ENCODE measurements at regions of chr11 and their contacts with region 1.

Region 1: DNA sequence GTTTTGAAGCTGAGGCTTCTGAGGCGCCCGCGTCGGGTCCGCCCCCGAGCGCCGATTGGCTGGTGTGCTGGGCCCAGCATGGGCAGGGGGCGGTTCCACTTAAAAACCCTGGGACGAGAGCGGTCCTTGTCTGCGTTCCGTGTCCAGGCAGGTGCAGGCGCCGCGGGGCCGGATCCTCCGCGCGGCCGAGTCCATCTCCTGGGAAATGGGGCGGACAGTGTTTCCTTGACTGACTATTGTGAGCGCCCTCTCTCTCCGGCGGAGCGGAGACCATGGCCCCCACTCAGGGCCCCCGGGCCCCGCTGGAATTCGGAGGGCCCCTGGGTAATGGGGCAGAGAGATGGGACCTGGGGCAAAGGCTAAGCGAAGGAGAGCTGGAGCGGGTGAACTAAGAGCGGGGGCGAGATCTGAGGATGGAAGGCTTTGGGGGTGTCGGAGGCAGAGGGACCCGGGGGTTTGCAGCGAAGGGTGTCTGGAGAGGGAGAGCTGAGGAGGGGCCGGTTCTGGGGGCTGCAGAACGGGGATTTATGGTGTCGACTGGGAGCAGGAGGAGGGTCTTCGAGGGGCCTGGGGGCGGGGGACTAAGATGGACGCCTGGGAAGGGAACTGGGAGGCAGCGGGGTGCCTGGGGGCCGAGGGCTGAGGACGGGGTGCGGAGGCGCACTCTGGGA is at the start of gene TM7SF2:
- DNase-seq: peak; percentile 84 to 96 (median 90)
- ATAC-seq: peak; percentile 69 to 71
- H3K4me3 Mint-ChIP-seq: peak within 1 kb of the TSS; percentile 81 to 99 (median 88)
- H3K27ac Mint-ChIP-seq: peak within 1 kb of the TSS; percentile 63 to 99 (median 92)
- H3K4me1 Mint-ChIP-seq: peaks cover 27 to 50% (median 42%) of the 10 kb centered on the region in 4 donors
- H3K27me3 Mint-ChIP-seq: no peaks in the 10 kb centered on the region
- polyA plus RNA-seq, gene TM7SF2: 17.4 to 22.6 (median 21.2) TPM

Region 2: GRCh38 chr11:64947208-64947814 is 164.6 kb before region 1 on chr11:
- POLR2A ChIA-PET with region 1: no interaction called
- DNase-seq: no peak
- ATAC-seq: no peak
- H3K4me3 Mint-ChIP-seq: no peak overlapping the region
- H3K27ac Mint-ChIP-seq: no peak overlapping the region
- H3K4me1 Mint-ChIP-seq: no peaks in the 10 kb centered on the region
- H3K27me3 Mint-ChIP-seq: peaks cover 0 to 4% (median 0%) of the 10 kb centered on the region in 5 donors

Region 3: DNA sequence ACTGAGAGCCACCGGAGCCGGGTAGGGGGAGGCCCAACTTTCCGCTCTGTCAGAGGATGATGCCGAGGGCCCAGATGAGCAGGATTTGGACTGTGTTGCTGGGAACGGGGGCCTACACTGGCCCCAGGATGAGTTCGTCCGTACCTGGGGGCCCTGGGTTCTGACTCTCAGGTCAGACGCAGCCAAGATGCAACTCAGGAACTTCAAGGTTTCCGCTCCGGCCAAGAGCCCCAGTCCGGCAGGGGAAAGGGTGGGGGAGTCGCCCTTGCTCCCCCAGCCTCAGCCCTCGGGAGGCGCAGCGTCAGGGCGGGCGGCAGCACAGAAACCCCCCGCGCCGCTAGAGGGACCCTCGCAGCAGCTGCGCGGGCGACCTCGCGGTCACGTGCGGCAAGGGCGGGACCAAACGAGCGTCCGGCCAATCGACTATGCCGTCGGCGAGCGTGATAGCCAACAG is 98.2 kb before region 1 on chr11:
- POLR2A ChIA-PET with region 1: interaction called, 19 read pairs
- DNase-seq: peak; percentile 83 to 93 (median 90)
- ATAC-seq: peak; percentile 82 to 89
- H3K4me3 Mint-ChIP-seq: peak overlapping the region; percentile 86 to 94 (median 89)
- H3K27ac Mint-ChIP-seq: peak overlapping the region; percentile 82 to 99 (median 94)
- H3K4me1 Mint-ChIP-seq: peaks cover 17 to 31% (median 29%) of the 10 kb centered on the region in 4 donors
- H3K27me3 Mint-ChIP-seq: no peaks in the 10 kb centered on the region

Region 4: DNA sequence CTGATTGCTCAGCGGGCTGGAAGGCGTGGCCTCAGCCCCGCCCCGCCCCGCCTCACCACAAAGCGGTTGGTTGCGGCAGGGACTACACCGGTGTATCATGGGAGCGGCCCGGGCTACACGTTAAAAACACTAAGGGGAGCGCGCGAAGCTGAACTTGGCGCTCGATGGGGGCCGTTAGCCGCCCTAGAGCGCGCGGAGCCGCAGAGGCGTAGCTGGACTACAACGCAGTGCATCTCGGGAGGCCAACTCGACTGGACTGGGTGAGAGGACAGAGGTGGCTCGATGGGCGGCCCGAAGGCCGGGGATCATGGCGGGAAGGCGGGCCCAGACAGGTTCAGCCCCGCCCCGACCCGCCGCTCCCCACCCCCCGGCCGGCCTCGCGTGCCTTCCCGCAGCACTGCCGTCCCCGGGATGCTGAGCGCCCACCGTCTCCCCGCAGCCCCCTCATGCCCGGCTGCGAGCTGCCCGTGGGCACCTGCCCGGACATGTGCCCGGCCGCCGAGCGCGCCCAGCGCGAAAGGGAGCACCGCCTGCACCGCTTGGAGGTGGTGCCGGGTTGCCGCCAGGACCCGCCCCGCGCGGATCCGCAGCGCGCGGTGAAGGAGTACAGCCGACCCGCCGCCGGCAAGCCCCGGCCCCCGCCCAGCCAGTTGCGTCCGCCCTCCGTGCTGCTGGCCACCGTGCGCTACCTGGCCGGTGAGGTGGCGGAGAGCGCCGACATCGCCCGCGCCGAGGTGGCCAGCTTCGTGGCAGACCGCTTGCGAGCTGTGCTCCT is 70.8 kb before region 1 on chr11 and contains the start of gene SAC3D1:
- POLR2A ChIA-PET with region 1: interaction called, 12 read pairs
- DNase-seq: peak; percentile 75 to 92 (median 85)
- ATAC-seq: peak; percentile 91 to 92
- H3K4me3 Mint-ChIP-seq: peak within 1 kb of the TSS; percentile 90 to 96 (median 93)
- H3K27ac Mint-ChIP-seq: peak within 1 kb of the TSS; percentile 78 to 95 (median 92)
- H3K4me1 Mint-ChIP-seq: peaks cover 5 to 27% (median 19%) of the 10 kb centered on the region in 4 donors
- H3K27me3 Mint-ChIP-seq: no peaks in the 10 kb centered on the region
- polyA plus RNA-seq, gene SAC3D1: 6.7 to 13.9 (median 10.7) TPM

Region 5: DNA sequence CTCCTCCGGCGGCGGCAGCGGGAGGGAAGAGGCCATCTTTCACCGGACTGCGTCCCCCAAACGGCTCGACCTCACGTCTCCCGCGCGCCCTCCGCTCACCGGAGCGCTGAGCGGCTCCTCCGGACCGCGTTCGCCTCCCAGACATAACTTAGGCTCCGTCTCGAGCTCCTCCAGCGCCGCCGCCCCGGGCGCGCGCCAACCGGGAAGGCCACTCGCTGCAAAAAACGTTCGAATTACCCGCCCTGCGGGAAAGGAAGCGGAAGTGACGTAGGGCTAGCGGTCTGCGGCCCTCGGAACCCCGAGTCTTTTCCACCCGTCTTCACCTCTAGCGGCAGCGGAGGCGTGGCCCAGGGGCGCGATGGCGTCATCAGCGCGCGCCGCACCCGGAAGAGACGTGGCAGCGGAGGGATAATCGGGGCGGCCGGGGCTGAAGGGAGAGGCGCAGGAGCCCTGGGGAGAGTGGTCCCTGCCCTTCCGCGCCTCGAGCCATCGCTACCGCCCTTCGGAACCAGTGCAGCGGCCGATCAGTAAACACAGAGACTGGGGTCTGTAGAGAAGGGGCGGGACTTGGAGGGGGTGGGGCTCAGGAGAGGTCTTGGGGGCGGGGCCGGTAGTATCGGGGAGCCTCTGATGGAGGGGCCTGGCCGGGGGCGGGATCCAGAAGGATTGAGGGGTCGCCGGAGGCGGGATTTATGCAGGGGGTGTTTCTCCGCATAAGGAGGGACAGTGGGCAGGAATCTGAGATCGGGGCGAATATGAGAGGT is 27.9 kb before region 1 on chr11 and contains the starts of genes CDCA5 and ZFPL1:
- POLR2A ChIA-PET with region 1: interaction called, 18 read pairs
- DNase-seq: peak; percentile 92 to 98 (median 96)
- ATAC-seq: peak; percentile 88 to 92
- H3K4me3 Mint-ChIP-seq: peak within 1 kb of the TSS; percentile 86 to 99 (median 92)
- H3K27ac Mint-ChIP-seq: peak within 1 kb of the TSS; percentile 91 to 99 (median 98)
- H3K4me1 Mint-ChIP-seq: peaks cover 18 to 31% (median 27%) of the 10 kb centered on the region in 4 donors
- H3K27me3 Mint-ChIP-seq: peaks cover 0 to 2% (median 0%) of the 10 kb centered on the region in 5 donors
- polyA plus RNA-seq, gene CDCA5: 0.22 to 0.90 (median 0.35) TPM
- polyA plus RNA-seq, gene ZFPL1: 21.5 to 33.1 (median 24.9) TPM

Region 6: GRCh38 chr11:65095974-65096806 is 15.7 kb before region 1 on chr11 and contains the start of gene VPS51:
- POLR2A ChIA-PET with region 1: interaction called, 115 read pairs
- DNase-seq: peak; percentile 65 to 93 (median 87)
- ATAC-seq: peak; percentile 88 to 90
- H3K4me3 Mint-ChIP-seq: peak within 1 kb of the TSS; percentile 77 to 96 (median 90)
- H3K27ac Mint-ChIP-seq: peak within 1 kb of the TSS; percentile 88 to 98 (median 96)
- H3K4me1 Mint-ChIP-seq: peaks cover 5 to 25% (median 13%) of the 10 kb centered on the region in 4 donors
- H3K27me3 Mint-ChIP-seq: no peaks in the 10 kb centered on the region
- polyA plus RNA-seq, gene VPS51: 70.2 to 111 (median 106) TPM

Region 7: DNA sequence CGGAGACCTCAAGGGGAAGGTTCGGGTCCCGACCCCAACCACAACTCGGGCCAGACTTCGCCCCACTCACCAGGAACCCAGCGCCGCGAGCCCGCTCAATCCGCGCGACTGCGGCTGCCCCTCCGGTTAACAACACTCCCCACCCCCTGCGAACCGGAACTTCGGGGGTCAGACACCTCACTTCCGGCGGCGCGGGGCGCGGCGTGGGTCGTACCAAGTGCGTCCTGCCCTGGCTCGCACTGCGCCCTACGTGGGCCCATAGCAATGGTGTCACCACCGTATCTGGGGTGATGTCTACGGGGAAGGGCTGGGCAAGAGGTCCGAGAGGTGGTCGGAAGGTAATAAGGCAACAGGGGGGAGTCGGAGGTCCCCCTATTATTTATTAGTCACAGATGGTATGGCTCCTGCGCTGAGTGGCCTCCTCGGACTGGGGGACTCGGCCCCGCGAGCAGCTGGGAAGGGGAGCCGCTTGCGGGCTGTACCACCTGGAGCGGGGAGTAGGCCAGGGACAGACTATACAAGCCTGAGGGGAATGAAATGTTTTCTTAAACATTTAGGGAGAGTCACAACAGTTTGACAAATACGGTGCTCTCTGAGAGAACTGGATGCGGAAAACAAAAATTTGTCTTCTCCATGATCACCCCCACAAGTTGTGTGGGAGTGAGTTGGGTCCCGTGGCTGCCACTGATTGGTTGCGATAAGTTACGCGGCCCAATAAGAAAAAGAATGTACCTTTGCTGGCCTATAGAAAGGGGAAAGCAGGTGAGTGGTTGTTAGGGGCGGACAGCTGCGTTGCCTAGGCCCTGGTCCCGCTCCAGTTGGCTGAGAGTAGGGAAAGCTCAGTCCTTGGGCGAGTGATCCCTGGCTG is 22.7 kb after region 1 on chr11 and contains the start of gene SYVN1:
- POLR2A ChIA-PET with region 1: interaction called, 43 read pairs
- DNase-seq: peak; percentile 84 to 97 (median 90)
- ATAC-seq: peak; percentile 89 to 90
- H3K4me3 Mint-ChIP-seq: peak within 1 kb of the TSS; percentile 94 to 100 (median 98)
- H3K27ac Mint-ChIP-seq: peak within 1 kb of the TSS; percentile 99 to 100 (median 100)
- H3K4me1 Mint-ChIP-seq: peaks cover 26 to 57% (median 45%) of the 10 kb centered on the region in 4 donors
- H3K27me3 Mint-ChIP-seq: no peaks in the 10 kb centered on the region
- polyA plus RNA-seq, gene SYVN1: 7.9 to 10.6 (median 8.2) TPM

Region 8: DNA sequence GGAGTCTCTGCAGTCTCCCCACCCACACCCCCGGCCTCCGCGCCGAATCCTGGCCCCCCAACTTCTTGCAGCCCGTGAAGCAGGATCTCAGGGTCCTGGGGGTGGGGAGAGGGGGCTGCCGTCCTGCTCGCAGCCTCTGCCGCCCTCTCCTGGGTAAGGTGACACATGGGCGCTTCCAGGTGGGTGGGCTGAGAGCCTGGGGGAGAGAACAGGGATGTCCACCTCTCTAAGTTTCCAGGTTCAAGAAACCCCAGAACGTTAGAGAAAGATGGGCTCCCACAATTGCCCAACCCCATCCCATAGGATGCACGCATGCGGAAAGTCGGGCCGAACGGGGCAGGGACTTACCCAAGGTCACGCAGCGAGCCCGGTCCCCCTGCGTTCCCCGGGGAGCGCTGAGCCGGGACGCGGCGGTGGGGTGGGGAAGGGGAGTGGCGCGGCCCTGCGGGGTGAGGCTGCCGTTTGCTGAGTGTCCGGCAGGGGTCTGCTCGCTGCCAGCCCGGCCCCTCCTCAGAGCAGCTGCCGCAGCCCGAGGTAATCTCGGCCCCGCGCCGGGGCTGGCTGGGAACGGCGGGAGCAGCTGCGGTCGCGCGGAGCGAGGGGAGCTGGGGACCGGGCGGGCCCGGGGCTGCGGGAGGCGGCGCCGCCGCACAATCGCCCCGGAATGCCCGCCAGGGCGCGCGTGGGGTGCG is 69.1 kb after region 1 on chr11:
- POLR2A ChIA-PET with region 1: interaction called, 15 read pairs
- DNase-seq: peak; percentile 36 to 77 (median 55)
- ATAC-seq: peak; percentile 75 to 82
- H3K4me3 Mint-ChIP-seq: peak overlapping the region; percentile 85 to 96 (median 89)
- H3K27ac Mint-ChIP-seq: peak overlapping the region; percentile 75 to 92 (median 86)
- H3K4me1 Mint-ChIP-seq: peaks cover 9 to 34% (median 27%) of the 10 kb centered on the region in 4 donors
- H3K27me3 Mint-ChIP-seq: no peaks in the 10 kb centered on the region

Region 9: DNA sequence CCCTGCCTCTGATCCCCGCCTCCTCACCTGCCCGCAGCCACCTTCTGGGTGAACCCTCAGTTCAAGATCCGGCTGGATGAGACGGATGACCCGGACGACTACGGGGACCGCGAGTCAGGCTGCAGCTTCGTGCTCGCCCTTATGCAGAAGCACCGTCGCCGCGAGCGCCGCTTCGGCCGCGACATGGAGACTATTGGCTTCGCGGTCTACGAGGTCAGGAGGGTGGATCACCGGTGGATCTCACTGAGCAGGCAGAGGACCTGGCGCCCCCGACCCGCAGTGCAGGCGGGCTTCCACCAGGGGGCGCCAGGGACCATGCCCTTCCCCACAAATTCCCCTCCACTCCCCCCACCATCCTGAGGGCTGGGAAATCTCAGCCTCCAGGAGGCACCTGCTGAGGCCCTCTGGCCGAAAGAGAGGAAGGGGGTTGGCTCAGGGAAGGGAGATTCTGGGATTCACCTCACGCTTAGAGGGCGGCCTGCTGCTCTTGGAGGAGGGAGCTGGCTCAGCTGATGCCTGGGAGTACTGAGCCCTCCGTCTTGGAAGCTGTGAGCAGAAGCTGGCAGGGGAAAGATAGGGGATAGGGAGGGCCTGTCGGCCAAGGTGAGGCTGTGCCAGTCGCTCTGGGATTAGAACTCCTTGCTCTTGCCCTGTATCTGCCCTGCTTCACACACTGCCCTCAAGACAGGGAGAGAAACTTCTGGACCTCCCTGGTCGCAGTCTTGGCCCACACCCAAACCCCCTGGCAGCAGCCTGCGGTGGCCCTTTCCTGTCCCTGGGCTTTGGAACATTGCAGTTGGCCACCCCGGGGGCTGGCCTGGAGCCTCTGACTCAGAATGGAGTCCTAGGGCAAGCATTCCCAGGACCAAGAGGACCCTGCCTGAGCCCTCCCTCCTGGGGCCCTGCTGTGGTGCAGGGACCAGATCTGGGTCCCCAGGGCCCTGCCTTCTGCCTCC is 93.0 kb after region 1 on chr11:
- POLR2A ChIA-PET with region 1: no interaction called
- DNase-seq: peak in 8 of 10 donors; percentile 27 to 62 (median 54)
- ATAC-seq: peak; percentile 59 to 73
- H3K4me3 Mint-ChIP-seq: no peak overlapping the region
- H3K27ac Mint-ChIP-seq: no peak overlapping the region
- H3K4me1 Mint-ChIP-seq: peaks cover 2 to 11% (median 7%) of the 10 kb centered on the region in 4 donors
- H3K27me3 Mint-ChIP-seq: no peaks in the 10 kb centered on the region

Measured in naive thymus-derived CD8-positive, alpha-beta T cell (primary cell).